PC-9 (cell line): ENCODE measurements at regions of chr2 and their contacts with region 1.

Region 1: DNA sequence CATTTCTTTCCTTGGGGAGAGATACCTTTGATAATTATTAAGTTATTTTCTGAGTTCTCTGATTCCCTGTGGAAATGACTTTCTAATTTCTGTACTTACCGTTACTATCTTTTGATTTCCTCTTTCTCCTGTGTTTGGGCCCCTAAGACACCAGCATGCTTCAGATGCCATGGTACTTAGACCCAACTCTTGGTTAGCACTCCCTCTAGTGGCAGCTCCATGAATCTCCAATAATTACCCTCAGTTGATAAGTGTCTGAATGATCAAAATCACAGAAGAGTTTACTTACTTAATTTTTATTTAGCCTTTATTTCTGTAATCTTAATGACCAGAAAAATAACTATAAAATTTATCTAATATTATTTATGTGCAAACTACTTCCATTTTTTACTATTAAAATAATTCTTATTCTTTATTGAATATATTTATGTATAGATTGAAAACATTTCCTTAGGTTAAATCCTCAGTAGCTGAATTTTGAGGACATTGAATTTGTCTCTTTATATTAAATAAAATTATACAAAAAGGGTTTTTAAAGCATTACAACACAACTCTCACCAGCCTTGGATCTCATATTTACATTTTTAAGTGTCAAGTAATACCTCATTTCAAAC is 300.4 kb downstream of the KCNS3 start:
- DNase-seq: peak in 1 of 2 experiments; percentile 9
- H3K4me3 ChIP-seq: no peak overlapping the region
- H3K27ac ChIP-seq: no peak overlapping the region
- H3K4me1 ChIP-seq: 0 out of 2 replicates have a peak, but pooled peaks cover 4% of the 10 kb centered on the region
- H3K27me3 ChIP-seq: no peaks in the 10 kb centered on the region
- CTCF ChIP-seq: peak; percentile 85

Region 2: GRCh38 chr2:16763493-16763899 is 1415.3 kb before region 1 on chr2:
- CTCF ChIA-PET with region 1: no interaction called
- POLR2A ChIA-PET with region 1: interaction called, 18 read pairs
- intact Hi-C with region 1: no loop called
- DNase-seq: peak in 1 of 2 experiments; percentile 64
- H3K4me3 ChIP-seq: no peak overlapping the region
- H3K27ac ChIP-seq: no peak overlapping the region
- H3K4me1 ChIP-seq: peaks cover 15% of the 10 kb centered on the region
- H3K27me3 ChIP-seq: no peaks in the 10 kb centered on the region
- CTCF ChIP-seq: no peak

Region 3: DNA sequence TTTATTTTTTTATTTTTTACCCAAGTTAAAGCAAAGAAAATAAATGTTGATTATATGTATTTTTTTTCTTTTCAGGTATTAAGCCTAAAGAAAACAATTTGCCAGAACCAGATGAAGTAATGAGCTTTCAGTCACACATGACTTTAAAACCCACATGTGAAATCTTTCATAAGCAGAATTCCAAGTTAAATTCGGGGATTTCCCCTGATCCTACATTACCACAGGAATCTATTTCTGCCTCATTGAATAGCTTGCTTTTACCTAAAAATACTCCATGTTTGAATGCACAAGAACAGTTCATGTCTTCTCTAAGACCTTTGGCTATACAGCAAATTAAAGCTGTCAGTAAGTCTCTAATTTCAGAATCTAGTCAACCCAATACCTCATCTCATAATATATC is 398.3 kb before region 1 on chr2:
- CTCF ChIA-PET with region 1: no interaction called
- POLR2A ChIA-PET with region 1: no interaction called
- intact Hi-C with region 1: no loop called
- DNase-seq: no peak
- H3K4me3 ChIP-seq: no peak overlapping the region
- H3K27ac ChIP-seq: no peak overlapping the region
- H3K4me1 ChIP-seq: no peaks in the 10 kb centered on the region
- H3K27me3 ChIP-seq: no peaks in the 10 kb centered on the region
- CTCF ChIP-seq: no peak

Region 4: GRCh38 chr2:18123211-18123570 is 55.7 kb before region 1 on chr2:
- CTCF ChIA-PET with region 1: no interaction called
- POLR2A ChIA-PET with region 1: no interaction called
- intact Hi-C with region 1: no loop called
- DNase-seq: peak in 1 of 2 experiments; percentile 48
- H3K4me3 ChIP-seq: no peak overlapping the region
- H3K27ac ChIP-seq: no peak overlapping the region
- H3K4me1 ChIP-seq: no peaks in the 10 kb centered on the region
- H3K27me3 ChIP-seq: no peaks in the 10 kb centered on the region
- CTCF ChIP-seq: no peak

Region 5: GRCh38 chr2:18262601-18263000 is 83.8 kb after region 1 on chr2:
- CTCF ChIA-PET with region 1: no interaction called
- POLR2A ChIA-PET with region 1: no interaction called
- intact Hi-C with region 1: no loop called
- DNase-seq: no peak
- H3K4me3 ChIP-seq: no peak overlapping the region
- H3K27ac ChIP-seq: no peak overlapping the region
- H3K4me1 ChIP-seq: no peaks in the 10 kb centered on the region
- H3K27me3 ChIP-seq: no peaks in the 10 kb centered on the region
- CTCF ChIP-seq: no peak

Region 6: DNA sequence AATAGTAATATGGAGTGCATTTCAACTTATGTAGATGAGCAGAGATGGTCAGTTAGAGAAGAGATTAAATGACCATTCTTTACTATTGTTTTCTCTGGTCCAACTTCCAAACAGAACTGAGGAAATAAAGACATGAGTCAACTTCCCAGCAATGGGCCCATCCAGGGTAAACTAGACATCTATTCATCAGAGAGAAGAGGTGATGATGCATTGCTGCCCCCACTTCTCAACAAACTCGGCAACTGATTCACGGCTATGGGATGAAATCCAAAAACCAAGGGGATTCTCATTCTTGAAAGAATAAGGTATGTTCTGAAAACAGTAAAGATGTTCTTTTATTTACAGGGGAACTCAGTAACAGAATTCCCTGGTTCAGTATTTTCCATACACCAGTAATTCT is 190.9 kb after region 1 on chr2:
- CTCF ChIA-PET with region 1: no interaction called
- POLR2A ChIA-PET with region 1: no interaction called
- intact Hi-C with region 1: no loop called
- DNase-seq: no peak
- H3K4me3 ChIP-seq: no peak overlapping the region
- H3K27ac ChIP-seq: no peak overlapping the region
- H3K4me1 ChIP-seq: no peaks in the 10 kb centered on the region
- H3K27me3 ChIP-seq: no peaks in the 10 kb centered on the region
- CTCF ChIP-seq: no peak